Heart left ventricle (tissue), 16 donors: ENCODE measurements at regions of chr15 and their contacts with region 1.

Region 1: GRCh38 chr15:64775551-64776401 is at the start of gene RBPMS2:
- DNase-seq: peak; percentile 57 to 75 (median 62)
- ATAC-seq: peak in 3 of 4 donors; percentile 60 to 70 (median 67)
- H3K4me3 ChIP-seq: peak within 1 kb of the TSS; percentile 44 to 97 (median 74)
- H3K27ac ChIP-seq: peak within 1 kb of the TSS; percentile 82 to 98 (median 92)
- H3K4me1 ChIP-seq: peaks cover 0 to 40% (median 8%) of the 10 kb centered on the region in 12 donors
- H3K27me3 ChIP-seq: peaks cover 0 to 27% (median 0%) of the 10 kb centered on the region in 9 donors
- CTCF ChIP-seq: no peak
- POLR2A ChIP-seq: no peak
- total RNA-seq, gene RBPMS2: 49.8 to 530 (median 189) TPM

Region 2: DNA sequence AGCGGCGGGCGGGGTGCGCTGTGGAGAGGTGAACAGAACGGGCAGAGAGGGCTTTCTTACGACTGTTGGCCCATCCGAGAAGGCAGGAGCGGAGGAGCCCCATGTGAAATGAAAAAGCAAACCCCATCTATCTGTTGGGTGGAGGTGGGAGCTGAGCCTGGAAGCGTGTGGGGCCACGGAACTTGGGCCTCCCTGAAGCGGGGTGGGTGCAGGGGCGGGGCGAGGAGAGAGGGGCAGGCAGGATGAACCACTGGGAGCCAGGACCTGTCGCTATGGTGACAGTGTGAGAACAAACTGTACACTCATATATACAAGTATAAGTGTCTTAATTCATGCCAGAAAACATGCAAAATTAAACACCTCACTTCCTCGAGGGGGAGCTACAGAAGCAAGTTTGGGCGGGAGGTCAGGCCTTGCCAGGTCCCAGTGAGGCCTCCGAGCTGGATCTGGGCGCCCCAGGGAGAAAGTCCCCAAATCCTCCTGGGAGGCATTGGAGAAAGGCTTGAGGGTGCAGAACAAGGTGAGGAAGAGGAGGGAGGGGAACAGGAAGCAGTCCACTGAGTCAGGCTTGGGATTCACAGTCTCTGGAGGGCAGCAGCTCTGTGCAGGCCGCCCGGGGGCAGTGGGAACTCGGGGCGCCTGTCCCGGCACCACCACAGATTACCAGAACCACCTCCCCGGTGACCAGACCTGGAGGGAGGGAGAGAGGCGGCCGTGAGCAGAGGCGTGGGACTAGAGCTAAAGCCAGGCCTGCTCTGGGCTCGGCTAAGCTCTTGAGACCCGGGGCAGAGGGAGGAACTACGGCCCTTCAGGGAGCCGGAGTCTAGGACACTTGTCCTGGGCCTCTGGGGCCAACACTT is 35.2 kb before region 1 on chr15:
- intact Hi-C with region 1: loop called in 1 of 10 experiments (anchors 2 kb)
- DNase-seq: peak; percentile 58 to 87 (median 72)
- ATAC-seq: peak; percentile 88 to 91 (median 90)
- H3K4me3 ChIP-seq: peak overlapping the region in 6 of 12 donors; percentile 1 to 40 (median 12)
- H3K27ac ChIP-seq: peak overlapping the region; percentile 7 to 90 (median 60)
- H3K4me1 ChIP-seq: peaks cover 0 to 59% (median 24%) of the 10 kb centered on the region in 12 donors
- H3K27me3 ChIP-seq: no peaks in the 10 kb centered on the region
- CTCF ChIP-seq: peak in 10 of 12 donors; percentile 10 to 54 (median 38)
- POLR2A ChIP-seq: peak in 1 of 2 donors; percentile 10

Region 3: GRCh38 chr15:64749999-64750657 is 25.6 kb before region 1 on chr15:
- intact Hi-C with region 1: loop called in 1 of 10 experiments (anchors 2 kb)
- DNase-seq: peak in 4 of 5 donors; percentile 54 to 76 (median 69)
- ATAC-seq: peak; percentile 36 to 66 (median 48)
- H3K4me3 ChIP-seq: peak overlapping the region in 6 of 12 donors; percentile 7 to 41 (median 32)
- H3K27ac ChIP-seq: peak overlapping the region; percentile 16 to 76 (median 69)
- H3K4me1 ChIP-seq: peaks cover 0 to 88% (median 36%) of the 10 kb centered on the region in 12 donors
- H3K27me3 ChIP-seq: no peaks in the 10 kb centered on the region
- CTCF ChIP-seq: peak in 3 of 12 donors; percentile 8 to 35 (median 35)
- POLR2A ChIP-seq: no peak

Region 4: GRCh38 chr15:64803526-64803925 is 27.8 kb after region 1 on chr15:
- intact Hi-C with region 1: loop called in 2 of 10 experiments (anchors 2 to 5 kb)
- DNase-seq: no peak
- ATAC-seq: no peak
- H3K4me3 ChIP-seq: no peak overlapping the region
- H3K27ac ChIP-seq: peak overlapping the region in 8 of 12 donors; percentile 16 to 90 (median 76)
- H3K4me1 ChIP-seq: peaks cover 0 to 39% (median 12%) of the 10 kb centered on the region in 12 donors
- H3K27me3 ChIP-seq: no peaks in the 10 kb centered on the region
- CTCF ChIP-seq: no peak
- POLR2A ChIP-seq: no peak